MCF 10A (cell line): ENCODE measurements at regions of chr22 and their contacts with region 1.

Region 1: DNA sequence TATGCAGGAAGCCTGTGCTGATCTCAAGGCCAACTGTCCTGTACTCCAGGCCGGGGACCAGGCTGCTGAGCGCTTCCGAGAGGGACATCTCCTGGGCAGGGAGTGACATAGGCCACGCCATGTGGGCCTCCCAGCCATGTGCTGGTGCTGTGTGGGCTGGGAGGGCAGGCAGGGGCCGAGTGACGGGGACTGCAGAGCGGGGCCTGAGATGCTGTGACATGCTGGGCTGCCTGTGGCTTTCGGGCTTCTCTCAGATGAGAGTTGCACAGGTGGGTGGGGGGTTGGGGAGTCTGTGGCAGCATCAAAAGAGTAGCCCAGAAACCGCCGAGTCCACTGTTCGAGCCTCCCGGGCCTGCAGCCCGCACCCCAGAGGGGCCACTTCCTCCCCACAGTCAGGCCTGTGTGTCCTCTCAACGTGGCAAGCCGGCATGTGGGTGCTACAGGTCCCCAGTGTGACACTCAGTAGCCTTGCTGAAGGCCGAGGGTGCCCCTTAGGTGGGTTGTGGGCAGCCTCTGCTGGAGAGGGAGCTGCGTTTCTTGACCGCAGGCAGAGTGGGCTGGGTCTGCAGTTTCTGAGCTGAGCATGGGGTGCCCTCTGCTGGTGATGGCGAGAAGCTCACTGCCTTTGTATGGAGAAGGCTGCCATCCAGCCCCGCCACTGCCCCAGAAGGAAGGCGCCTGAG is 101.2 kb downstream of the BCR start:
- DNase-seq: peak; percentile 80
- H3K4me3 Mint-ChIP-seq: peak overlapping the region; percentile 41
- H3K27ac Mint-ChIP-seq: peak overlapping the region; percentile 84
- H3K4me1 Mint-ChIP-seq: peaks cover 25% of the 10 kb centered on the region
- H3K27me3 Mint-ChIP-seq: no peaks in the 10 kb centered on the region
- CTCF ChIP-seq: peak; percentile 95

Region 2: GRCh38 chr22:23225724-23226496 is 55.6 kb before region 1 on chr22:
- CTCF ChIA-PET with region 1: interaction called, 8 read pairs
- POLR2A ChIA-PET with region 1: interaction called, 18 read pairs
- intact Hi-C with region 1: no loop called
- DNase-seq: peak; percentile 92
- H3K4me3 Mint-ChIP-seq: peak overlapping the region; percentile 62
- H3K27ac Mint-ChIP-seq: peak overlapping the region; percentile 95
- H3K4me1 Mint-ChIP-seq: peaks cover 52% of the 10 kb centered on the region
- H3K27me3 Mint-ChIP-seq: no peaks in the 10 kb centered on the region
- CTCF ChIP-seq: no peak

Region 3: GRCh38 chr22:23256986-23257888 is 24.3 kb before region 1 on chr22:
- CTCF ChIA-PET with region 1: interaction called, 3 read pairs
- POLR2A ChIA-PET with region 1: no interaction called
- intact Hi-C with region 1: loop called (anchors 2 kb)
- DNase-seq: peak; percentile 51
- H3K4me3 Mint-ChIP-seq: no peak overlapping the region
- H3K27ac Mint-ChIP-seq: peak overlapping the region; percentile 88
- H3K4me1 Mint-ChIP-seq: peaks cover 12% of the 10 kb centered on the region
- H3K27me3 Mint-ChIP-seq: no peaks in the 10 kb centered on the region
- CTCF ChIP-seq: no peak

Region 4: GRCh38 chr22:23270212-23270733 is 11.3 kb before region 1 on chr22:
- CTCF ChIA-PET with region 1: interaction called, 12 read pairs
- POLR2A ChIA-PET with region 1: interaction called, 3 read pairs
- intact Hi-C with region 1: no loop called
- DNase-seq: no peak
- H3K4me3 Mint-ChIP-seq: no peak overlapping the region
- H3K27ac Mint-ChIP-seq: no peak overlapping the region
- H3K4me1 Mint-ChIP-seq: no peaks in the 10 kb centered on the region
- H3K27me3 Mint-ChIP-seq: no peaks in the 10 kb centered on the region
- CTCF ChIP-seq: no peak